Activated CD4-positive, alpha-beta T cell treated with anti-CD3 and anti-CD28 coated beads for 36 hours (primary cell): ENCODE measurements at regions of chr19 and their contacts with region 1.

Region 1: GRCh38 chr19:32674959-32675719 is at the start of gene ANKRD27:
- DNase-seq: peak; percentile 99
- ATAC-seq: peak; percentile 95
- H3K4me3 Mint-ChIP-seq: peak within 1 kb of the TSS; percentile 78
- H3K27ac Mint-ChIP-seq: peak within 1 kb of the TSS; percentile 69
- H3K4me1 Mint-ChIP-seq: peaks cover 30% of the 10 kb centered on the region
- H3K27me3 Mint-ChIP-seq: peaks cover 11% of the 10 kb centered on the region
- total RNA-seq, gene ANKRD27: 36.6 to 37.0 TPM

Region 2: GRCh38 chr19:32345261-32346207 is 329.6 kb before region 1 on chr19 and contains the start of gene ZNF507:
- CTCF ChIA-PET with region 1: no interaction called
- POLR2A ChIA-PET with region 1: no interaction called
- intact Hi-C with region 1: loop called in 1 of 2 experiments (anchors 1 kb)
- DNase-seq: peak; percentile 93
- ATAC-seq: peak; percentile 82
- H3K4me3 Mint-ChIP-seq: peak within 1 kb of the TSS; percentile 92
- H3K27ac Mint-ChIP-seq: peak within 1 kb of the TSS; percentile 95
- H3K4me1 Mint-ChIP-seq: peaks cover 42% of the 10 kb centered on the region
- H3K27me3 Mint-ChIP-seq: peaks cover 2% of the 10 kb centered on the region
- total RNA-seq, gene ZNF507: 25.2 to 27.6 TPM

Region 3: GRCh38 chr19:32580901-32581703 is 94.0 kb before region 1 on chr19 and contains the start of gene PDCD5:
- CTCF ChIA-PET with region 1: interaction called, 4 read pairs
- POLR2A ChIA-PET with region 1: no interaction called
- intact Hi-C with region 1: loop called (anchors 1 kb)
- DNase-seq: peak; percentile 99
- ATAC-seq: peak; percentile 90
- H3K4me3 Mint-ChIP-seq: peak within 1 kb of the TSS; percentile 92
- H3K27ac Mint-ChIP-seq: peak within 1 kb of the TSS; percentile 91
- H3K4me1 Mint-ChIP-seq: peaks cover 33% of the 10 kb centered on the region
- H3K27me3 Mint-ChIP-seq: peaks cover under 1% of the 10 kb centered on the region
- total RNA-seq, gene PDCD5: 268 to 272 TPM

Region 4: DNA sequence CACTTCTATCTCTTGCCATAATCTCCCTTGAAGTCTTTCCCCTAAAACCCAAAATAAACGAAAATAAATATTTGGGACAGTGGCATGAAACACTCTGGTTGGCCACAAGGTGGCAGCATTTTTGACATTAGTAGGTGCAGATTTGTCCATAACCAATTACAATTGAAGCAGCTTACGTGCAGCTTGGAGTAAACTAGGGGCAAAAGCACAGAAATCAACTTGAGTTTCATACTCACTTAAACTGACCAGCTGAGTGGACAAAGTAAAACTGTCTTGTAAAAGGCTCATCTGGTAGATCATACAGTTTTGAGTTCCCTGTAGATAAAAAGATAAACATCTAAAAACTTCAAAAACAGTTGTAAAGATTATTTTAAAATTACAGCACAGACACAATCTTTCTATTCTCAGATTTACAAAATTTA is 75.4 kb before region 1 on chr19:
- CTCF ChIA-PET with region 1: interaction called, 3 read pairs
- POLR2A ChIA-PET with region 1: no interaction called
- intact Hi-C with region 1: loop called (anchors 2 kb)
- DNase-seq: peak; percentile 62
- ATAC-seq: peak; percentile 66
- H3K4me3 Mint-ChIP-seq: no peak overlapping the region
- H3K27ac Mint-ChIP-seq: no peak overlapping the region
- H3K4me1 Mint-ChIP-seq: peaks cover 7% of the 10 kb centered on the region
- H3K27me3 Mint-ChIP-seq: no peaks in the 10 kb centered on the region

Region 5: GRCh38 chr19:32642771-32643170 is 32.4 kb before region 1 on chr19:
- CTCF ChIA-PET with region 1: interaction called, 4 read pairs
- POLR2A ChIA-PET with region 1: no interaction called
- intact Hi-C with region 1: loop called in 1 of 2 experiments (anchors 2 kb)
- DNase-seq: peak; percentile 84
- ATAC-seq: peak; percentile 99
- H3K4me3 Mint-ChIP-seq: no peak overlapping the region
- H3K27ac Mint-ChIP-seq: no peak overlapping the region
- H3K4me1 Mint-ChIP-seq: peaks cover 36% of the 10 kb centered on the region
- H3K27me3 Mint-ChIP-seq: no peaks in the 10 kb centered on the region

Region 6: DNA sequence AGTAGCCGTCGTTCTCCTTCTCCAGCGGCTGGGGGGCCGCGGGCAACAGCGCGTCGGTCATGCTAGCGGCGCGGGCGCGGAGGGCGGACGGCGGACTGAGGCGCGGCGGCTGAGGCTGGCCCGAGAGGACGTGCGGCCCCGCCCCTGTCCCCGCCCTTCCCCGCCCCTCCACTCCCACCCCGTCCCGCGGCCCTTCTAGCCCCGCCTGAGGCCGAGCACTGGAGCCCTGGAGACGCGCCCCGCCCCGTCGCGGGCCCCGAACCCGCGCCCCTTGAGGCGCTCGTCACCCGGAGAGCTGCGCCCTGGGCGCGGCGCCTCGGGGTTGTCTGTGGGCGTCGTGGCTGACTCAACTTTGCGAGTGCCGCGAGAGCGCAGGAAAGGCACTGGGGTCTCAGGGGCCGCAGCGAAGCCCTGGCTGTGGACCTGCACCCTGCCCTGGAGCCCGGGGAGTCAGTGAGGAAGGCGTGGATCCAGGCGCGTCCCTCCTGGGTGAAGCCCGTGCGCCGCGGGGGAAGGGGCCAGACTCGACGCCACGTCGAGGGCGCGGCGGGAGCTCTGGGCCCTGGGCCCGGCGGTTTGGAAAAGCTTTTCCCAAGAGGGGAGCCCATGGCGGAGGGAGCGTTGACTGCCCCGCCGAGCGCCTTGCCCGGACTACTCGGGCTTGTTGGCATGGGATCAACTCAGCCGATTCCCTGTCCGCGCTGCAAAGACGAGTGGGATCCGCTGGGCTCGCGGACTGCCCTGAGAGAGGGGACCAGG is 389.8 kb after region 1 on chr19 and contains the start of gene RHPN2:
- CTCF ChIA-PET with region 1: no interaction called
- POLR2A ChIA-PET with region 1: no interaction called
- intact Hi-C with region 1: loop called in 1 of 2 experiments (anchors 1 kb)
- DNase-seq: peak; percentile 82
- ATAC-seq: peak; percentile 95
- H3K4me3 Mint-ChIP-seq: peak within 1 kb of the TSS; percentile 67
- H3K27ac Mint-ChIP-seq: no peak within 1 kb of the TSS
- H3K4me1 Mint-ChIP-seq: peaks cover 3% of the 10 kb centered on the region
- H3K27me3 Mint-ChIP-seq: peaks cover 28% of the 10 kb centered on the region
- total RNA-seq, gene RHPN2: 5.1 to 5.7 TPM

Region 7: GRCh38 chr19:33080761-33081681 is 405.9 kb after region 1 on chr19 and contains the start of gene GPATCH1:
- CTCF ChIA-PET with region 1: interaction called, 3 read pairs
- POLR2A ChIA-PET with region 1: interaction called, 5 read pairs
- intact Hi-C with region 1: loop called in 1 of 2 experiments (anchors 1 kb)
- DNase-seq: peak; percentile 93
- ATAC-seq: peak; percentile 94
- H3K4me3 Mint-ChIP-seq: peak within 1 kb of the TSS; percentile 99
- H3K27ac Mint-ChIP-seq: peak within 1 kb of the TSS; percentile 97
- H3K4me1 Mint-ChIP-seq: peaks cover 16% of the 10 kb centered on the region
- H3K27me3 Mint-ChIP-seq: no peaks in the 10 kb centered on the region
- total RNA-seq, gene GPATCH1: 9.5 to 11.1 TPM